Dendritic cell treated with granulocyte-macrophage colony-stimulating factor and Interleukin-4, amounts not matched to agents 40 ng/mL and 50 ng/mL, for 4 days (primary cell): ENCODE measurements at regions of chr15 and their contacts with region 1.

Region 1: GRCh38 chr15:91852741-91853510 is 582 bp upstream of the SLCO3A1 start:
- H3K4me3 Mint-ChIP-seq: peak overlapping the region; percentile 89
- H3K27ac Mint-ChIP-seq: peak overlapping the region; percentile 97
- H3K4me1 Mint-ChIP-seq: peaks cover 58% of the 10 kb centered on the region
- H3K27me3 Mint-ChIP-seq: peaks cover 1% of the 10 kb centered on the region

Region 2: GRCh38 chr15:91302588-91303439 is 550.1 kb before region 1 on chr15:
- intact Hi-C with region 1: loop called (anchors 2 kb)
- H3K4me3 Mint-ChIP-seq: no peak overlapping the region
- H3K27ac Mint-ChIP-seq: no peak overlapping the region
- H3K4me1 Mint-ChIP-seq: peaks cover 9% of the 10 kb centered on the region
- H3K27me3 Mint-ChIP-seq: peaks cover 17% of the 10 kb centered on the region

Region 3: GRCh38 chr15:91706322-91707032 is 146.4 kb before region 1 on chr15:
- intact Hi-C with region 1: loop called (anchors 5 kb)
- H3K4me3 Mint-ChIP-seq: peak overlapping the region; percentile 72
- H3K27ac Mint-ChIP-seq: peak overlapping the region; percentile 91
- H3K4me1 Mint-ChIP-seq: peaks cover 45% of the 10 kb centered on the region
- H3K27me3 Mint-ChIP-seq: peaks cover 13% of the 10 kb centered on the region

Region 4: DNA sequence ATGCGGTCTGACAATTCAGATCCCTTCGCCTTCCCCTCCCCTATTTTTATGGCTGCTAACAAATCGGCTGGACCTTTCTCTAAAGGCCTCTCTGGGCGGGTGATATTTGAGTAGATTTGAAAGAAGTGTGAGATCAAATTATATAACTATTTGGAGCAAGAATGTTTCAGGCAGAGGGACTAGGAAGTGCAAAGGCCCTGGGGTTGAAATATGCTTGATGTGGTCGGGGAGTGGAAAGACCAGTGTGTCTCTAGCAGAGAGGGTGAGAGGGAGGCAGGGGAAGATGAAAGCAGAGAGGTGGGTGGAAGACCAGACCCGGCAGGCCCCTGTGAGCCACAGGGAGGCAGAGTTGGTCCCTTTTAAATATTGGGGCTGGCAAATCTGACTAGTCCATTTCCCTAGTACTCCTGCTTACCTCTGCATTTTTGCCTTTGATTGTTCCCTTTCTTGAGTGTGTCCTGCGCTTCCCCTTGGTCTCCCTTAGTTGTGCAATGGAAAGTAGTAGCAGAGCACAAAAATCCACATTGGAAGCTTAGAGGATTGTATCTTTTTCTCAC is 32.9 kb after region 1 on chr15:
- intact Hi-C with region 1: loop called (anchors 5 kb)
- H3K4me3 Mint-ChIP-seq: no peak overlapping the region
- H3K27ac Mint-ChIP-seq: peak overlapping the region; percentile 78
- H3K4me1 Mint-ChIP-seq: peaks cover 76% of the 10 kb centered on the region
- H3K27me3 Mint-ChIP-seq: no peaks in the 10 kb centered on the region

Region 5: GRCh38 chr15:91921188-91921842 is 68.4 kb after region 1 on chr15:
- intact Hi-C with region 1: loop called (anchors 5 kb)
- H3K4me3 Mint-ChIP-seq: peak overlapping the region; percentile 57
- H3K27ac Mint-ChIP-seq: peak overlapping the region; percentile 94
- H3K4me1 Mint-ChIP-seq: peaks cover 79% of the 10 kb centered on the region
- H3K27me3 Mint-ChIP-seq: no peaks in the 10 kb centered on the region

Region 6: GRCh38 chr15:91942676-91943576 is 90.0 kb after region 1 on chr15:
- intact Hi-C with region 1: loop called (anchors 5 kb)
- H3K4me3 Mint-ChIP-seq: peak overlapping the region; percentile 69
- H3K27ac Mint-ChIP-seq: peak overlapping the region; percentile 92
- H3K4me1 Mint-ChIP-seq: peaks cover 97% of the 10 kb centered on the region
- H3K27me3 Mint-ChIP-seq: no peaks in the 10 kb centered on the region

Region 7: DNA sequence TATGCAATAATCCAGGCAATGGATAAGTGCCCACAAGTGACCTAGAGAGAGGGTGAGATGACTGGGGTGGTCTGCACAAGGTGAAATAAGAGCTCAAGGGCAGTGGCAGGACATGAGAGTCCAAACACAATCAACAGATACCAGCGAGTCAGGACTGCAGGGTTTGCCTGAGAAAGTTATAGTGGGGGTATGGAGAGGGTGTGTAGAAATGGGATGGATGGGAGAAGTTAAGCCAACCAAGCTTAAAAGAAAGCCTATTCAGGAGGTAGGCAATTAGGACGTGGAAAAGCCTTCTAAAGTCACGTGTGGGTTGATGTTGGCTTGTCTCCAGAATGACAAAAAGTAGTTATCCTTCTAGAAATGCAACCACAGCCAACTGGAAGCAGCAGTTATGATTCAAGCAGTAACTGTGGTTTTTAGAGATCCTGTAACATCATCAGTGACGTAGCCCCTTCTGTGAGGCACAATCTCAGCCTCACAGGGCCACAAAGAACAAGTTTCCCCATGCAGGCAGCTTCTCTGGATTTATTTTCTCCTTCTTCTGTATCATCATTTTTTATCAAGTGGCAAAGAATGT is 746.6 kb after region 1 on chr15:
- intact Hi-C with region 1: no loop called
- H3K4me3 Mint-ChIP-seq: no peak overlapping the region
- H3K27ac Mint-ChIP-seq: no peak overlapping the region
- H3K4me1 Mint-ChIP-seq: no peaks in the 10 kb centered on the region
- H3K27me3 Mint-ChIP-seq: peaks cover 10% of the 10 kb centered on the region